PC-9 (cell line): ENCODE measurements at regions of chr3 and their contacts with region 1.

Region 1: DNA sequence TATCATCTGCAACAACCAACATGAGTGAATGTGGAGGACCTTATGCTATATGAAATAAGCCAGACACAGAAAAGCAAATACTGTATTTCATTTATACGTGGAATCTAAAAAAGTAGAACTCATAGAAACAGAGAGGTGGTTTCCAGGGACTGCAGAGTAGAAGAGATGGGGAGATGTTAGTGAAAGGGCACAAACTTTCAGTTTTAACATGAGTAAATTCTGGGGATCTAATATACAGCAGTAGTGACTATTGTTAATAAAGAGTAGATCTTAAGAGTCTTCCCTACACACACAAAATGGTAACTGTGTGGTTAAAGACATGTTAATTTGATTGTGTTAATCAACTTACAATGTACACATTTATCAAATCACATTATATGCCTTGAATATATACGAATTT is 20.9 kb upstream of the MELTF start:
- DNase-seq: no peak
- H3K4me3 ChIP-seq: no peak overlapping the region
- H3K27ac ChIP-seq: no peak overlapping the region
- H3K4me1 ChIP-seq: no peaks in the 10 kb centered on the region
- H3K27me3 ChIP-seq: no peaks in the 10 kb centered on the region
- CTCF ChIP-seq: no peak

Region 2: DNA sequence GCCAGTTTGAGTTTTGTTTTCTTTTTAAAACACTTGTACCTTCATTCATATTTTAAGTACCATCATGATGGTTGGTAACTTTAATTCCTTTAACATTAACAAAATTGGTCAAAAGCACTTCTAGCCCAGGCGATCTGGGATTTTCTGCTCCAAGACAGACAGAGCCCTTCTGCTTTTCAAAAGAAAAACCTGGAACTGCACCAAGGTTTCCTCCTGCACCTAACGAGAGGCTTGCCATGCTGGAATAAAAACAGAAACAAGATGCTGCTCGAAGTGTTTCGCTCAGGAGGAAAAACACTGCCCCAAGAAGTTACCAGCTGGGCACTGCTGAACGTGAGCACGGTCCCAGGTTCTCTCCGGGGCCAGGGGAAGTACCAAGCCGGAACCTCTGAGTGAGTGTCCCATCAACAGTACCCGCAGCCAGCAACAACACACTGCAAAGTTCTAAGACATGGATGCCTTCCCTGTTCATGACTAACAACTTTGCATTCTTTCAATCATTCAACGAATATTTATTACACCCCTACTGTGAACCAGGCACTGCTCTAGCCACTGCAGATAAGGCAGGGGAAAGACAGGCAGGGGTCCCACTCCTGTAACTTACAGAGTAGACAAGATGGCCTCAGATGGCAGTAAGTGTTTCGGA is 1878.3 kb before region 1 on chr3:
- CTCF ChIA-PET with region 1: no interaction called
- POLR2A ChIA-PET with region 1: no interaction called
- intact Hi-C with region 1: no loop called
- DNase-seq: no peak
- H3K4me3 ChIP-seq: no peak overlapping the region
- H3K27ac ChIP-seq: no peak overlapping the region
- H3K4me1 ChIP-seq: no peaks in the 10 kb centered on the region
- H3K27me3 ChIP-seq: no peaks in the 10 kb centered on the region
- CTCF ChIP-seq: no peak

Region 3: GRCh38 chr3:196989721-196990271 is 60.7 kb before region 1 on chr3:
- CTCF ChIA-PET with region 1: interaction called, 10 read pairs
- POLR2A ChIA-PET with region 1: no interaction called
- intact Hi-C with region 1: no loop called
- DNase-seq: no peak
- H3K4me3 ChIP-seq: no peak overlapping the region
- H3K27ac ChIP-seq: no peak overlapping the region
- H3K4me1 ChIP-seq: no peaks in the 10 kb centered on the region
- H3K27me3 ChIP-seq: no peaks in the 10 kb centered on the region
- CTCF ChIP-seq: no peak